Adrenal gland (tissue), 19 donors: ENCODE measurements at regions of chr20 and their contacts with region 1.

Region 1: GRCh38 chr20:38057351-38057972 is 23.9 kb downstream of the RPRD1B start:
- DNase-seq: peak; percentile 71 to 94 (median 84)
- H3K4me3 ChIP-seq: no peak overlapping the region
- H3K27ac ChIP-seq: peak overlapping the region in 2 of 5 donors; percentile 19 to 33
- H3K4me1 ChIP-seq: peaks cover 0 to 22% of the 10 kb centered on the region in 2 donors
- H3K27me3 ChIP-seq: no peaks in the 10 kb centered on the region
- CTCF ChIP-seq: peak; percentile 86 to 96 (median 90)
- POLR2A ChIP-seq: no peak

Region 2: GRCh38 chr20:37856932-37857660 is 200.4 kb before region 1 on chr20:
- intact Hi-C with region 1: no loop called
- DNase-seq: no peak
- H3K4me3 ChIP-seq: no peak overlapping the region
- H3K27ac ChIP-seq: peak overlapping the region in 1 of 5 donors; percentile 23
- H3K4me1 ChIP-seq: no peaks in the 10 kb centered on the region
- H3K27me3 ChIP-seq: no peaks in the 10 kb centered on the region
- CTCF ChIP-seq: no peak
- POLR2A ChIP-seq: no peak

Region 3: GRCh38 chr20:37990571-37991151 is 66.8 kb before region 1 on chr20:
- intact Hi-C with region 1: loop called in 1 of 2 experiments (anchors 10 kb)
- DNase-seq: peak in 6 of 7 donors; percentile 28 to 83 (median 56)
- H3K4me3 ChIP-seq: no peak overlapping the region
- H3K27ac ChIP-seq: peak overlapping the region in 3 of 5 donors; percentile 49 to 79 (median 66)
- H3K4me1 ChIP-seq: peaks cover 25 to 68% of the 10 kb centered on the region in 2 donors
- H3K27me3 ChIP-seq: no peaks in the 10 kb centered on the region
- CTCF ChIP-seq: no peak
- POLR2A ChIP-seq: no peak

Region 4: GRCh38 chr20:38023181-38024001 is 34.1 kb before region 1 on chr20:
- intact Hi-C with region 1: no loop called
- DNase-seq: no peak
- H3K4me3 ChIP-seq: no peak overlapping the region
- H3K27ac ChIP-seq: peak overlapping the region in 1 of 5 donors; percentile 14
- H3K4me1 ChIP-seq: peaks cover 0 to 5% of the 10 kb centered on the region in 2 donors
- H3K27me3 ChIP-seq: no peaks in the 10 kb centered on the region
- CTCF ChIP-seq: no peak
- POLR2A ChIP-seq: no peak

Region 5: DNA sequence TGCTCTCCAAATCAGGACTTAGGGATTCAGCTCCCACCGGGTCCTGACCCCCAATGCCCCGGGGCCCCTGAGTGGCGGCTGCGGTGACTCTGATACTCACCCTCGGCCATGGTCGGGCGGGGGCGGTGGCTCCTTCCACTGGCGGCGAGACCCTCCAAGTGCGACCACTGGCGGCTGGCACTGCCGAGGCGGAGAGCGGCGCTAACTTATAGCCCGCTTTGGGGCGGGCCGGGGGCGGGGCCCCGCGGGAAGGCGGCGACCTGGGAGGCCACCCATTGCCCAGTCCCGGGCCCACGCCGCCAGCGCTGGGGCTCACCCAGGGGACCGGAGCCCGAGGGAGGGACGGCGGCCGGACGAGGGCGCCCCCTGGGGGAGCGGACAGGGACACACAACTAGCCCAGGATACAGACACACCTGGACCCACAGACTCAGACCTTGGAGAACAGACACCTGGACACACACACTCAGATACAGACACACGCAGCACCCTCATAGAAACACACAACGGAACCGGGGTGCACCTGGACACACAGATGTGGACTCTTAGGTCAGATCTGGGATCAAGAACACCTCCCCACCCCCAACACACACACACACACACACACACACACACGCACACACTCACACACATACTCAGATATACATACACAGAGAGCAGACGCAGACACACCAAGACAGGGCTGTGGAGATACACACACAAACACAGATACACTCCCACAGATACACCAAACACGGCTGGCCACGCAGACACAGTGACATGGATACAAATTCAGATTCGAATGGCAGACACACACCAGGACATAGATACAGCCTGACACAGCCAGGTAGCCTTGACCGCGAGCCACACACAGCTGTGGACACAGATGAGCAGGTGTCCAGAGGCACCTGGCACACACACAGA is 107.9 kb after region 1 on chr20 and contains the start of gene TGM2:
- intact Hi-C with region 1: loop called (anchors 5 kb)
- DNase-seq: peak; percentile 78 to 88 (median 85)
- H3K4me3 ChIP-seq: peak within 1 kb of the TSS in 2 of 4 donors; percentile 45 to 72
- H3K27ac ChIP-seq: peak within 1 kb of the TSS in 3 of 5 donors; percentile 19 to 89 (median 60)
- H3K4me1 ChIP-seq: peaks cover 17 to 18% of the 10 kb centered on the region in 2 donors
- H3K27me3 ChIP-seq: no peaks in the 10 kb centered on the region
- CTCF ChIP-seq: peak; percentile 59 to 96 (median 91)
- POLR2A ChIP-seq: peak in 1 of 2 donors; percentile 27
- total RNA-seq, gene TGM2: 13.4 to 262 (median 108) TPM

Region 6: GRCh38 chr20:38221119-38221589 is 163.7 kb after region 1 on chr20:
- intact Hi-C with region 1: loop called (anchors 5 kb)
- DNase-seq: peak; percentile 49 to 84 (median 71)
- H3K4me3 ChIP-seq: no peak overlapping the region
- H3K27ac ChIP-seq: no peak overlapping the region
- H3K4me1 ChIP-seq: no peaks in the 10 kb centered on the region
- H3K27me3 ChIP-seq: no peaks in the 10 kb centered on the region
- CTCF ChIP-seq: peak; percentile 81 to 95 (median 86)
- POLR2A ChIP-seq: no peak